ENCODE measurements at regions of chr3 and their contacts with region 1.

Region 1: GRCh38 chr3:61561374-61562041 is at the start of gene PTPRG:
- DNase-seq: no peak
- ATAC-seq: peak; percentile 61
- H3K4me3 ChIP-seq: peak within 1 kb of the TSS; percentile 59
- H3K27ac ChIP-seq: no peak within 1 kb of the TSS
- H3K4me1 ChIP-seq: no peaks in the 10 kb centered on the region
- H3K27me3 ChIP-seq: peaks cover 5 to 20% of the 10 kb centered on the region in 2 experiments
- CTCF ChIP-seq: no peak
- EP300 ChIP-seq: no peak
- POLR2A ChIP-seq: no peak
- RAD21 ChIP-seq: no peak
- polyA plus RNA-seq, gene PTPRG: 0.29 to 0.42 TPM

Region 2: GRCh38 chr3:61202086-61202485 is 359.4 kb before region 1 on chr3:
- CTCF ChIA-PET with region 1: no interaction called
- POLR2A ChIA-PET with region 1: no interaction called
- RAD21 ChIA-PET with region 1: no interaction called
- SMC1A ChIA-PET with region 1: no interaction called
- in situ Hi-C with region 1: no loop called
- intact Hi-C with region 1: no loop called
- DNase-seq: no peak
- ATAC-seq: no peak
- H3K4me3 ChIP-seq: no peak overlapping the region
- H3K27ac ChIP-seq: no peak overlapping the region
- H3K4me1 ChIP-seq: 0 out of 2 replicates have a peak, but pooled peaks cover 3% of the 10 kb centered on the region
- H3K27me3 ChIP-seq: no peaks in the 10 kb centered on the region
- CTCF ChIP-seq: no peak
- EP300 ChIP-seq: no peak
- POLR2A ChIP-seq: no peak
- RAD21 ChIP-seq: no peak

Region 3: GRCh38 chr3:61520966-61521628 is 40.4 kb before region 1 on chr3:
- CTCF ChIA-PET with region 1: interaction called, 6 read pairs
- POLR2A ChIA-PET with region 1: interaction called, 4 read pairs
- RAD21 ChIA-PET with region 1: interaction called, 6 read pairs
- SMC1A ChIA-PET with region 1: interaction called, 15 read pairs
- in situ Hi-C with region 1: no loop called
- intact Hi-C with region 1: no loop called
- DNase-seq: peak; percentile 77
- ATAC-seq: peak; percentile 96
- H3K4me3 ChIP-seq: no peak overlapping the region
- H3K27ac ChIP-seq: no peak overlapping the region
- H3K4me1 ChIP-seq: no peaks in the 10 kb centered on the region; the same call in 1 of the 2 replicates
- H3K27me3 ChIP-seq: no peaks in the 10 kb centered on the region
- CTCF ChIP-seq: no peak
- EP300 ChIP-seq: peak; percentile 49 to 70; a peak in 2 of 4 replicates
- POLR2A ChIP-seq: no peak
- RAD21 ChIP-seq: no peak

Region 4: GRCh38 chr3:61637088-61638051 is 75.9 kb after region 1 on chr3:
- CTCF ChIA-PET with region 1: no interaction called
- POLR2A ChIA-PET with region 1: interaction called, 11 read pairs
- RAD21 ChIA-PET with region 1: interaction called, 10 read pairs
- SMC1A ChIA-PET with region 1: interaction called, 8 read pairs
- in situ Hi-C with region 1: no loop called
- intact Hi-C with region 1: loop called (anchors 5 kb)
- DNase-seq: peak; percentile 48
- ATAC-seq: peak; percentile 97
- H3K4me3 ChIP-seq: no peak overlapping the region
- H3K27ac ChIP-seq: no peak overlapping the region
- H3K4me1 ChIP-seq: peaks cover 10% of the 10 kb centered on the region; the same call in 1 of the 2 replicates
- H3K27me3 ChIP-seq: no peaks in the 10 kb centered on the region
- CTCF ChIP-seq: no peak
- EP300 ChIP-seq: peak; percentile 56 to 95; a peak in 3 of 4 replicates
- POLR2A ChIP-seq: no peak
- RAD21 ChIP-seq: no peak

Region 5: DNA sequence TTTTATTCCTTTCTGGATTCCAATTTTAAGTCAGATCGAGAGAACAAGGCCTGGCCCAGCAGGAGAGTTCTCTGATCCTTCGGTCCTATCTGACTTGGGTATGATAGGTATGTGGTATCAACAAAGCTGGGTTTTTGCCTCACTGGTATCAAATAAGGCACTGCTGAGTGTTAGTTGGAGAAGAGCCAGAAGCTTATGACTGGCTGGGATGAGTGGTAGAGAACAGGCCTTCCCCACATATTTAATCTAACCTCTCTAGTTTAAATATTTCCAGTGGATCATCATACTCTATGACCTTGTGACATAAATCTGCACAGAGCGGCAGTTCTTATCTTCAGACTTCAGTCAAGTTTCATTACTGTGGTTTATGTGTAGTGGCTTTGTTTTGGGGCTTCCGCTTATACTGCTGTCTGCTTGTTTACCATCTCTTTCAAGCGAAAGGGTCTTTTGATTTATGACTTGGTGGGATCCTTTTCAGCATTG is 164.4 kb after region 1 on chr3:
- CTCF ChIA-PET with region 1: no interaction called
- POLR2A ChIA-PET with region 1: interaction called, 3 read pairs
- RAD21 ChIA-PET with region 1: interaction called, 6 read pairs
- SMC1A ChIA-PET with region 1: interaction called, 4 read pairs
- in situ Hi-C with region 1: no loop called
- intact Hi-C with region 1: loop called (anchors 10 kb)
- DNase-seq: no peak
- ATAC-seq: peak; percentile 39
- H3K4me3 ChIP-seq: no peak overlapping the region
- H3K27ac ChIP-seq: no peak overlapping the region
- H3K4me1 ChIP-seq: no peaks in the 10 kb centered on the region
- H3K27me3 ChIP-seq: no peaks in the 10 kb centered on the region
- CTCF ChIP-seq: no peak
- EP300 ChIP-seq: 0 out of 4 replicates have a peak, but pooled peaks of 1 of the 2 experiments have one; percentile 39
- POLR2A ChIP-seq: no peak
- RAD21 ChIP-seq: no peak

Region 6: DNA sequence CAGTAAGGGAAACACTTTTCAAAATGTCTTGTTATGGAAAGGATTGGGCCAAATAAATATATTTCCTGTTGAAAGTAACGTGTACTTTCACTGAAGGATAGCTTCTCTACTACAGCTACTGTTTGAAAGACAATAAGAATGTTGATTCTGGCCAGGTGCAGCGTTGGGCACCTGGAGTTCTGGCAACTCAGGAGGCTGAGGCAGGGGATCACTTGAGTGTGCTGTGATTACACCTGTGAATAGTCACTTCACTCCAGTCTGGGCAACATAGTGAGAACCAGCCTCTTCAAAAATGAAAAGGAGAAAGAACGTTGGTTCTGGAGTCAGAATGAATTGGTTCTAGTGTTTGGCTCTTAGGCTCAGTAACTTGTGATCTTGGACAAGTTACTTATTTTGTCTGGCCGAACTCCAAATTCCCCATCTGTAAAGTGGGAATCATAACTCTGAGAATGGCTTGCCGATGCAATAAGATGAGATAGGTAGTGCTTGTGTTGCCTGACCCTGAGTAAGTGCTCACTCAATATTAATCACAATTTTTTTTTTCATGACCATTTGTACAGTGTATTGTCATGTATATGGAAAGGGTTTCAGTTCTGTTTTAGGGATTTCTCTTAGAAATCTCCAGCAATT is 310.7 kb after region 1 on chr3:
- CTCF ChIA-PET with region 1: interaction called, 5 read pairs
- POLR2A ChIA-PET with region 1: no interaction called
- RAD21 ChIA-PET with region 1: interaction called, 13 read pairs
- SMC1A ChIA-PET with region 1: interaction called, 5 read pairs
- in situ Hi-C with region 1: no loop called
- intact Hi-C with region 1: no loop called
- DNase-seq: no peak
- ATAC-seq: no peak
- H3K4me3 ChIP-seq: no peak overlapping the region
- H3K27ac ChIP-seq: no peak overlapping the region
- H3K4me1 ChIP-seq: no peaks in the 10 kb centered on the region
- H3K27me3 ChIP-seq: no peaks in the 10 kb centered on the region
- CTCF ChIP-seq: no peak
- EP300 ChIP-seq: no peak
- POLR2A ChIP-seq: no peak
- RAD21 ChIP-seq: no peak

Region 7: GRCh38 chr3:62051507-62051906 is 490.0 kb after region 1 on chr3:
- CTCF ChIA-PET with region 1: interaction called, 21 read pairs
- POLR2A ChIA-PET with region 1: interaction called, 3 read pairs
- RAD21 ChIA-PET with region 1: interaction called, 12 read pairs
- SMC1A ChIA-PET with region 1: interaction called, 12 read pairs
- in situ Hi-C with region 1: no loop called
- intact Hi-C with region 1: no loop called
- DNase-seq: no peak
- ATAC-seq: peak; percentile 26; the same call in 1 of the 3 replicates
- H3K4me3 ChIP-seq: no peak overlapping the region
- H3K27ac ChIP-seq: no peak overlapping the region
- H3K4me1 ChIP-seq: no peaks in the 10 kb centered on the region
- H3K27me3 ChIP-seq: no peaks in the 10 kb centered on the region; a peak in 1 of 4 replicates
- CTCF ChIP-seq: peak in 2 of 3 experiments; percentile 6 to 22; a peak in 2 of 6 replicates
- EP300 ChIP-seq: no peak
- POLR2A ChIP-seq: no peak
- RAD21 ChIP-seq: no peak

Measured in GM12878 (cell line).